Activated CD8-positive, alpha-beta memory T cell treated with anti-CD3 and anti-CD28 coated beads, Interleukin-2, amount 10 ng/mL, durations not matched to agents 7 days and 5 days (primary cell): ENCODE measurements at regions of chr2 and their contacts with region 1.

Region 1: GRCh38 chr2:178881075-178881474 is 73.9 kb upstream of the TTN start:
- DNase-seq: no peak
- ATAC-seq: no peak
- H3K4me3 Mint-ChIP-seq: no peak overlapping the region
- H3K27ac Mint-ChIP-seq: no peak overlapping the region
- H3K4me1 Mint-ChIP-seq: no peaks in the 10 kb centered on the region
- H3K27me3 Mint-ChIP-seq: peaks cover 10% of the 10 kb centered on the region

Region 2: GRCh38 chr2:178747767-178748166 is 133.3 kb before region 1 on chr2:
- CTCF ChIA-PET with region 1: no interaction called
- DNase-seq: no peak
- ATAC-seq: no peak
- H3K4me3 Mint-ChIP-seq: no peak overlapping the region
- H3K27ac Mint-ChIP-seq: no peak overlapping the region
- H3K4me1 Mint-ChIP-seq: no peaks in the 10 kb centered on the region
- H3K27me3 Mint-ChIP-seq: peaks cover 3% of the 10 kb centered on the region

Region 3: GRCh38 chr2:178891265-178891958 is 10.3 kb after region 1 on chr2:
- CTCF ChIA-PET with region 1: interaction called, 10 read pairs
- DNase-seq: peak; percentile 73
- ATAC-seq: peak; percentile 79
- H3K4me3 Mint-ChIP-seq: no peak overlapping the region
- H3K27ac Mint-ChIP-seq: no peak overlapping the region
- H3K4me1 Mint-ChIP-seq: peaks cover 2% of the 10 kb centered on the region
- H3K27me3 Mint-ChIP-seq: peaks cover 2% of the 10 kb centered on the region

Region 4: DNA sequence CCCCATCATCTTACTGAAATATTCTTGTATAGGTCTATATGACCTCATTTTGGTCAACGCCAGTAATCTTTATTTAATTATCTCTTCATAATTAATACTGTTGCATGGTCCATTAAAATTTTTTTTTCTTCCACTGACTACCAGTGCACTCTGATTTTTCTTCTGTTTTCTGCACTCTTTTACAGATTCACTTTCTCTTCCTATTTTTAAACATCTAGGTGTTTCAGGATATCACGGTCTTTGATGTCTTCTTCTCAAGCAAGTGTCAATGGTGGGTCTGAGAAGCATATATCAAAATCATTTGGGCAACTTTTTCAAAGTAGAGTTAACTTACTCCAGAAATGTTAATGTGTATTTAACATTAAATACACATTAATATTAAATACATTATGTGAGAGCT is 117.5 kb after region 1 on chr2:
- CTCF ChIA-PET with region 1: no interaction called
- DNase-seq: no peak
- ATAC-seq: no peak
- H3K4me3 Mint-ChIP-seq: no peak overlapping the region
- H3K27ac Mint-ChIP-seq: no peak overlapping the region
- H3K4me1 Mint-ChIP-seq: peaks cover 6% of the 10 kb centered on the region
- H3K27me3 Mint-ChIP-seq: no peaks in the 10 kb centered on the region

Region 5: GRCh38 chr2:179818546-179818945 is 937.5 kb after region 1 on chr2:
- CTCF ChIA-PET with region 1: no interaction called
- DNase-seq: no peak
- ATAC-seq: no peak
- H3K4me3 Mint-ChIP-seq: no peak overlapping the region
- H3K27ac Mint-ChIP-seq: no peak overlapping the region
- H3K4me1 Mint-ChIP-seq: no peaks in the 10 kb centered on the region
- H3K27me3 Mint-ChIP-seq: peaks cover under 1% of the 10 kb centered on the region